T-cell (primary cell): ENCODE measurements at regions of chr5 and their contacts with region 1.

Region 1: DNA sequence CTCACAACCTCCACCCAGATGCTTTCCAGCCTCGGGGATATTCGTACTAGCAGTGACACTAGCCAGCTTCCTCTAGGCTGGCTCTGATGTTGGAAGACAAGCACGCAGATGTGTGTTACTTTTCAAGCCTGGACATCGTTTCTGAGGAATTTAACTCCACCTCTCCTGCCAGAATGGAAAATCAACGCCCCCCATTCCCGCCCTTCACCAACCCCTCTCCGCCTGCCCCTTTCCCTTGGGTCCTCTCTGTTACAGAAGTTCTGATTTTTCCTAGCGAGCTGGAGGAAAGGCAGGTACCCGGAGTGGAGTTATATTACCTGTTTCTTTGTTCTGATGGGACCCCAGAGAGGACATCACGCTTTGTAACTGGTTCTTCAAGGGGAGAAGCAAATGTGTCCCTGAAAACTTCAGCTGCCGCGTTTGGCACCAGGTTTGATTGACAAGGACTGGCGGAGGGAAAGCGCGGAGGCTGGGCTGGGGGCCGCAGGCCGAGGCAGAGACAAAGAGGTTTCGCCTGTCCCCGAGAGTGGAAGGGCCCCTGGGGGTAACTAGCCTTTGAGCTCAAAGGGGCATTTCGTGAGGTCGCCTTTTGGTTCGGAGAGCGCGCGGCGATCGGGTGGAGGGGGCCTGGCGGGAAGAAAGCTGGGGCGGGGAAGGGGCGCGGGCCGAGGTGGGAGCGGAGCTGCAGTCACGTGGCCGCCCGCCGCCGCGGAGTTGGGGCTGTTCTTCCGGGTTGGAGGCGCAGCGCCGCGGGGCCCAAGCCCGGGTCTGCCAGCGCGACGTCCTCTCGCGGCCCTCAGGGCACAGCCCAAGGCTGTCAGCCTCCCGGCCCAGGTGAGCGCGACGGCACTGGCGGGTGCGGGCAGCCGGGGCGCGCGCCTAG is at the start of gene NNT:
- DNase-seq: peak; percentile 52 to 86 (median 72)
- ATAC-seq: peak; percentile 85 to 89 (median 86)
- H3K4me3 ChIP-seq: peak within 1 kb of the TSS; percentile 87 to 91
- H3K4me3 Mint-ChIP-seq: peak within 1 kb of the TSS; percentile 89 to 96 (median 91)
- H3K27ac ChIP-seq: peak within 1 kb of the TSS; percentile 83
- H3K27ac Mint-ChIP-seq: peak within 1 kb of the TSS; percentile 88 to 95
- H3K4me1 ChIP-seq: peaks cover 8 to 23% of the 10 kb centered on the region in 2 experiments
- H3K4me1 Mint-ChIP-seq: peaks cover 59 to 71% (median 62%) of the 10 kb centered on the region in 3 donors
- H3K27me3 ChIP-seq: no peaks in the 10 kb centered on the region
- H3K27me3 Mint-ChIP-seq: no peaks in the 10 kb centered on the region
- total RNA-seq, gene NNT: 49.3 to 56.3 (median 52.6) TPM

Region 2: GRCh38 chr5:43556857-43557542 is 45.7 kb before region 1 on chr5 and contains the start of gene PAIP1:
- CTCF ChIA-PET with region 1: interaction called in 1 of 2 experiments, 10 read pairs
- POLR2A ChIA-PET with region 1: interaction called in 1 of 2 experiments, 4 read pairs
- DNase-seq: peak; percentile 63 to 89 (median 77)
- ATAC-seq: peak; percentile 83 to 87 (median 86)
- H3K4me3 ChIP-seq: peak within 1 kb of the TSS; percentile 74 to 87
- H3K4me3 Mint-ChIP-seq: peak within 1 kb of the TSS in 2 of 3 donors; percentile 90 to 92
- H3K27ac ChIP-seq: peak within 1 kb of the TSS; percentile 88
- H3K27ac Mint-ChIP-seq: peak within 1 kb of the TSS; percentile 97
- H3K4me1 ChIP-seq: peaks cover 9 to 22% of the 10 kb centered on the region in 2 experiments
- H3K4me1 Mint-ChIP-seq: peaks cover 7 to 11% (median 7%) of the 10 kb centered on the region in 3 donors
- H3K27me3 ChIP-seq: no peaks in the 10 kb centered on the region
- H3K27me3 Mint-ChIP-seq: peaks cover 4 to 5% of the 10 kb centered on the region in 2 donors
- total RNA-seq, gene PAIP1: 28.8 to 44.9 (median 35.0) TPM

Region 3: GRCh38 chr5:43631182-43631910 is 28.6 kb after region 1 on chr5:
- CTCF ChIA-PET with region 1: interaction called, 5 to 11 read pairs
- POLR2A ChIA-PET with region 1: interaction called in 1 of 2 experiments, 4 read pairs
- DNase-seq: peak in 19 of 35 experiments; percentile 1 to 69 (median 9)
- ATAC-seq: peak; percentile 54 to 84 (median 75)
- H3K4me3 ChIP-seq: no peak overlapping the region
- H3K4me3 Mint-ChIP-seq: no peak overlapping the region
- H3K27ac ChIP-seq: no peak overlapping the region
- H3K27ac Mint-ChIP-seq: no peak overlapping the region
- H3K4me1 ChIP-seq: peaks cover 0 to 3% of the 10 kb centered on the region in 2 experiments
- H3K4me1 Mint-ChIP-seq: peaks cover 21 to 37% (median 32%) of the 10 kb centered on the region in 3 donors
- H3K27me3 ChIP-seq: no peaks in the 10 kb centered on the region
- H3K27me3 Mint-ChIP-seq: no peaks in the 10 kb centered on the region

Region 4: GRCh38 chr5:43680286-43680685 is 77.6 kb after region 1 on chr5:
- CTCF ChIA-PET with region 1: no interaction called
- POLR2A ChIA-PET with region 1: no interaction called
- DNase-seq: no peak
- ATAC-seq: no peak
- H3K4me3 ChIP-seq: no peak overlapping the region
- H3K4me3 Mint-ChIP-seq: no peak overlapping the region
- H3K27ac ChIP-seq: no peak overlapping the region
- H3K27ac Mint-ChIP-seq: no peak overlapping the region
- H3K4me1 ChIP-seq: no peaks in the 10 kb centered on the region
- H3K4me1 Mint-ChIP-seq: peaks cover 0 to 6% (median 4%) of the 10 kb centered on the region in 3 donors
- H3K27me3 ChIP-seq: no peaks in the 10 kb centered on the region
- H3K27me3 Mint-ChIP-seq: no peaks in the 10 kb centered on the region